ENCODE measurements at regions of chr11 and their contacts with region 1.

Region 1: DNA sequence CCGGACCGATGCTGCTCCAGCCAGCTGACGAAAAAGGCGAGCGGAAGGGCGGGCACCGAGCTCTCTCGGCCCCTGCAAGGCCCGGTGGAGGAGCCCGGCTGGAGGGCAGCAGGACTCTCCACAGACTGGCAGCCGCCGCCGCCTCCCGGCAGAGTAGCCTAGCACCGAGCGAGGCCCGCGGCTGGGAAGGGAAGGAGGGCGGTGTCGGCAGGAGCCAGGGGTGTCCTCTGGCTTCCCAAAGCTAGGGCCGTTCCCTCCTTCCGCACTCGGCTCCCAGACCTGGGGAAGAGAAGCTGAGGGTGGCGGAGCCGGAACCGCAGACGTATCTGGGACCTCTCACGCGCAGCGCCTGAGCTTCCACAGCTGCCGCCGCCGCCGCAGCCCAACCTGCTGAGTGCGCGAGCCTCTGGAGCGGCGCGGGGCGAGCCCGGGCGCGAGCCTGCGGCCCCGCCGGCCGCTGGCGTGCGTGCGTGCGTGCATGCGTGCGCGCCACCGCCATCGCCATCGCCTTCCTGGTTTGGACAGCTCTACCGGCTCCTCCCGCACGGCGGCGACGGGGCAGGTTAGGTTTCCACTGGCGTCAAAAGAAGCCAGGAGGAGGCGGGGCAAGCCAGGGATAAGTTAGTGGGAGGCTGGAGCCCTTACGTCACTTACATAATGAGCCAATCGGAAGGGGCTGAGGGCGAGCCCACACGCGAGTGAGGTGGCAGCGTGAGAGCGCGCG is at the start of gene RAB6A:
- DNase-seq: peak; percentile 96 to 100 (median 99)
- ATAC-seq: peak; percentile 88 to 91
- H3K4me3 Mint-ChIP-seq: peak within 1 kb of the TSS; percentile 89 to 96 (median 94)
- H3K27ac Mint-ChIP-seq: peak within 1 kb of the TSS; percentile 90 to 98 (median 94)
- H3K4me1 Mint-ChIP-seq: peaks cover 12 to 37% (median 35%) of the 10 kb centered on the region in 4 donors
- H3K27me3 Mint-ChIP-seq: no peaks in the 10 kb centered on the region
- polyA plus RNA-seq, gene RAB6A: 79.3 to 94.3 (median 92.6) TPM

Region 2: GRCh38 chr11:73705053-73705452 is 55.8 kb before region 1 on chr11:
- POLR2A ChIA-PET with region 1: no interaction called
- DNase-seq: no peak
- ATAC-seq: no peak
- H3K4me3 Mint-ChIP-seq: no peak overlapping the region
- H3K27ac Mint-ChIP-seq: no peak overlapping the region
- H3K4me1 Mint-ChIP-seq: peaks cover 0 to 3% (median 0%) of the 10 kb centered on the region in 4 donors
- H3K27me3 Mint-ChIP-seq: no peaks in the 10 kb centered on the region

Region 3: DNA sequence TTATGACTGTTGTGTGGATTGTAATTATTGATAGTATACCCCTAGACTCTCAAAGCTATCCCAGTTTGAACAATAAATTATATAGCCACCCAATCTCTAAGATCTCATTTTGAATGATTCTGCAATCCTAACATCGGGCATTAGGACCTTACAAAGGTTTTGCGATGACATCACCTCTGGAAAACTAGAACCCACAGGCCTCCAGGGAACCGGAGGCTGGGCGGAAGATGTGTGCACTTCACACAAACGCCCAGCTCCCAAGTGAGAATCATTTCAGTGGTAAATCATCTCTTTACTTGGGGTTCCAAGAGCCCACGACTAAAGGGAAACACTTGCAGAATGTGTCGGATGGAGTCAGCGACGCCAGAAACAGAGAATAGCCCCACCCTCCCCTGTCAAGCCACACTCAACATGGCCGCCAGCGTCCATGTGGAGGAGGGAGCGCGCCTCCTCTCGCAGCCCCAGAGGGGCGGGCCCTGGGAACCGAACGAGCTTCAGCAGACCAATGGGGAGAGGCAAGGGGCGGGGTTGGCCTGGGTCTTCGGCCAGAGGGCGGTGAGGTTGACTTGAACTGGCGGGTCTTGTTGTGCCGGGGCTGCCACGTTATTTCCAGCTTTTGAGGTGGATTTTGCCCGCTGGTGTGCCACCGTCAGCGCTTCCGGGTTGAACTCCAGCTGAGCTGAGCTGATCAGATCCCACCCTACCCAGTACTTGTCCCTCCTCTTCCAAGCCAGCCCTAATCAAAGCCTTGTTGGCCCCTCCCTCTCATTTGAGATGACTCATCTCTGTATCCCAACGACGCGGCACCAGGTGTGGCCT is 18.5 kb after region 1 on chr11:
- POLR2A ChIA-PET with region 1: interaction called, 134 read pairs
- DNase-seq: peak; percentile 93 to 98 (median 96)
- ATAC-seq: peak; percentile 96 to 97
- H3K4me3 Mint-ChIP-seq: peak overlapping the region; percentile 89 to 96 (median 93)
- H3K27ac Mint-ChIP-seq: peak overlapping the region; percentile 96 to 100 (median 99)
- H3K4me1 Mint-ChIP-seq: peaks cover 4 to 8% (median 6%) of the 10 kb centered on the region in 4 donors
- H3K27me3 Mint-ChIP-seq: peaks cover 0 to 3% (median 0%) of the 10 kb centered on the region in 5 donors

Region 4: DNA sequence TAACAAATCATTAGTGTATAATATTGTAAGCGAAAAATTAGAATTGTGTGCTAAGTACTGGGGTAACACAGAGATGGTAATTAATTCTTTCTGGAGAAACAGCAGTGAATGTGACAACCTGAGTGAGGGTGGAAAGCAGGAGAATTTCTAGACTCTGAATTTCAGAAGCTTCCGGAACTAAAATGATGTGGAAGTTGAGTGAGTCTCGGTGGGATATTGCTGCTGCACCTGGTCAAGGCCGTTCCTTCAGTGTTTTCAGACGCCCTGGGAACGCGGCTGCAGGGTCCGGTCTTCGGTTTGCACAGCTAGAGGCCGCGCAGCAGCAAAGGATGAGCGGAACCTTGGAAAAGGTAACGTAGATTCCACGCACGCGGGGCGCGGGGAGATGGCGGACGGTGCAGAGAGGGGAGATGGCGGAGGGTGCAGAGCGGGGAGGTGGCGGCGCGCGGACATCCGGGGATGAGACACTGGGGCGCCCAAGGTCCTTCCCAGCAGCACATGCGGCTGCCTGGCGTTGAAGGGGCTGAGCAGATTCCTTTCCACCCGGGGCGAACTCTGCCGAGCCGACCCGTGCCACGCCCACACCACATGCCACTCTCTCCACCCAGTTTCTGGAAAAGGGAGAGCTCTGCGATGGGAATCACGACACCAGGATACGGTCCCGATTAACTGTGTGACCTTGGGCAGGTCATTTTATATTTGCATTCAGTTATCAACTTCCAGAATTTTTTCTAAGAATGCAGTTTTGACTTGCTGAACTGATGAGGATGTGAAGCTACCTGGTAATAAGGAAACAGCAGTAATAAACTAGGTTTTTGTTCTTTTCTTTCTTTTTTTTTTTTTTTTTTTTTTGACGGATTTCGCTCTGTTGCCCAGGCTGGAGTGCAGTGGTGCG is 27.0 kb after region 1 on chr11 and contains the start of gene MRPL48:
- POLR2A ChIA-PET with region 1: interaction called, 23 read pairs
- DNase-seq: peak; percentile 76 to 91 (median 84)
- ATAC-seq: peak; percentile 100
- H3K4me3 Mint-ChIP-seq: peak within 1 kb of the TSS; percentile 91 to 100 (median 99)
- H3K27ac Mint-ChIP-seq: peak within 1 kb of the TSS; percentile 98 to 100 (median 99)
- H3K4me1 Mint-ChIP-seq: peaks cover 9 to 31% (median 17%) of the 10 kb centered on the region in 4 donors
- H3K27me3 Mint-ChIP-seq: no peaks in the 10 kb centered on the region
- polyA plus RNA-seq, gene MRPL48: 73.9 to 85.2 (median 74.6) TPM

Measured in naive thymus-derived CD8-positive, alpha-beta T cell (primary cell).